ENCODE measurements at regions of chr1 and their contacts with region 1.

Region 1: DNA sequence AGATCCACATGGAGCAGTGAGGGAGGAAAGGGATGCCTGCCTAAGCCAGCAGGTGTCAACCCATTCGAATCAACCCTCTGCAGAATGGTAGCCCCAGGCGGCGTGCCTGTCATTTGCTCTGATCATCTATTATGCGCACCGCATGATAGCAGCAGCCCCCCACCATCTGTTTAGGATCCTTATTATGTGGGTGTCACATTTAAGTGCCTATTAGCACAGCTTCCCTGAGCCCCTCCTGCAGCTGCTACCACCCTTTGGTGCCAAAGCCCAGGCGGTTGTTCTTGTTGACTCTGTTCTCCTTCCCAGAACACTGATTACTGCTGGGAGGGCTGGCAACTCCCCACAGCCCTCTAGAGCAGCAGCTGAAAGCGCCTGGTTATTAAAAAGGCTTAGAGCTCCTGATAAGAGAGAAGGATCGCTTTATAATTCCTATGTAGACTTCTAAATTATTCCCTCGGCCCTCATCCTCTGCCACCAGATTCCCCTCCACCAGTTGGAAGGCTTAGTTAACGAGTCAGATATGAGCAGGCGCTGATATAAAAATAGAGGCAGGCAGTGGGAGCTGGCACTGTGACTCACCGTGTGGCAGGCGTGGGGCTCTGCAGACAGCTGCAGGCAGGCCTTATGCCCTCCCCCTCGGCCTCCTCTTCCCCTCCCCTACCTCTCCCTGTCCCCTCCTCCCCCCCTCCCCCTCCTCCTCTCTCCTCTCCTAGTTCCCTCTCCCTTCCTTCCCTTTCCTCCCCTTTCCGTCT is 23.0 kb downstream of the ACTA1 start:
- DNase-seq: peak; percentile 89 to 96
- ATAC-seq: peak; percentile 69 to 79
- H3K4me3 ChIP-seq: peak overlapping the region; percentile 2 to 23 (median 15)
- H3K27ac ChIP-seq: peak overlapping the region; percentile 89 to 95 (median 92)
- H3K4me1 ChIP-seq: peaks cover 53% of the 10 kb centered on the region in 2 donors
- H3K27me3 ChIP-seq: no peaks in the 10 kb centered on the region
- CTCF ChIP-seq: no peak
- POLR2A ChIP-seq: peak; percentile 61 to 63

Region 2: GRCh38 chr1:229341774-229342655 is 68.9 kb before region 1 on chr1:
- in situ Hi-C with region 1: no loop called
- intact Hi-C with region 1: loop called (anchors 2 kb)
- DNase-seq: peak; percentile 72 to 80
- ATAC-seq: peak; percentile 88 to 92
- H3K4me3 ChIP-seq: peak overlapping the region; percentile 75 to 99 (median 88)
- H3K27ac ChIP-seq: peak overlapping the region; percentile 78 to 93 (median 88)
- H3K4me1 ChIP-seq: peaks cover 6 to 15% of the 10 kb centered on the region in 2 donors
- H3K27me3 ChIP-seq: no peaks in the 10 kb centered on the region
- CTCF ChIP-seq: no peak
- POLR2A ChIP-seq: peak; percentile 59 to 73

Region 3: DNA sequence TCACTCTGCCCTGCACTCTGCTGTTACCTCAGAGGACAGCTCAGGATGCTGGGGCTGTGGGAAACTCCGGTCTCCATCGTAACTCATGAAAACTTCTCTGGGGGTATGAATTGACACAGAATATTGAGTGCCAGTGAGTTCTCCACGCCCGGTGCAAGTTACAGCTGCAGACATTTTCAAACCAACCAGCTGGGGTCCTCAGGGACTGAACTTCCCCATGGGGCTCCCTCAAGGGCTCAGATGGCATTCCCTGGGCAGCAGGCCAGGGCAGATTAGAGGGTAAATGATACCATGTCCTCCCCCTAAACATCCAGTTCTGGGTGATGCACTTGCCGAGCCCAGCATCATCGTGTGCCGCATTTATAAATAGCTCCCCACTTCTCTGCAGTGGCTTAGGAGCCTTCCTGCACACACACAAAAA is 40.3 kb before region 1 on chr1:
- in situ Hi-C with region 1: no loop called
- intact Hi-C with region 1: loop called (anchors 1 kb)
- DNase-seq: peak; percentile 31 to 81
- ATAC-seq: peak; percentile 67 to 78
- H3K4me3 ChIP-seq: no peak overlapping the region
- H3K27ac ChIP-seq: peak overlapping the region; percentile 8 to 31 (median 21)
- H3K4me1 ChIP-seq: peaks cover 24 to 26% of the 10 kb centered on the region in 2 donors
- H3K27me3 ChIP-seq: no peaks in the 10 kb centered on the region
- CTCF ChIP-seq: peak in 3 of 5 experiments; percentile 15 to 38 (median 19)
- POLR2A ChIP-seq: no peak

Region 4: GRCh38 chr1:229430761-229431283 is 20.0 kb after region 1 on chr1:
- in situ Hi-C with region 1: no loop called
- intact Hi-C with region 1: loop called (anchors 1 kb)
- DNase-seq: peak in 1 of 2 donors; percentile 85
- ATAC-seq: peak; percentile 37 to 39
- H3K4me3 ChIP-seq: peak overlapping the region in 1 of 4 donors; percentile 22
- H3K27ac ChIP-seq: peak overlapping the region; percentile 17 to 93 (median 48)
- H3K4me1 ChIP-seq: peaks cover 37 to 51% of the 10 kb centered on the region in 2 donors
- H3K27me3 ChIP-seq: peaks cover 0 to 16% (median 0%) of the 10 kb centered on the region in 3 donors
- CTCF ChIP-seq: peak in 2 of 5 experiments; percentile 23 to 45
- POLR2A ChIP-seq: no peak

Region 5: DNA sequence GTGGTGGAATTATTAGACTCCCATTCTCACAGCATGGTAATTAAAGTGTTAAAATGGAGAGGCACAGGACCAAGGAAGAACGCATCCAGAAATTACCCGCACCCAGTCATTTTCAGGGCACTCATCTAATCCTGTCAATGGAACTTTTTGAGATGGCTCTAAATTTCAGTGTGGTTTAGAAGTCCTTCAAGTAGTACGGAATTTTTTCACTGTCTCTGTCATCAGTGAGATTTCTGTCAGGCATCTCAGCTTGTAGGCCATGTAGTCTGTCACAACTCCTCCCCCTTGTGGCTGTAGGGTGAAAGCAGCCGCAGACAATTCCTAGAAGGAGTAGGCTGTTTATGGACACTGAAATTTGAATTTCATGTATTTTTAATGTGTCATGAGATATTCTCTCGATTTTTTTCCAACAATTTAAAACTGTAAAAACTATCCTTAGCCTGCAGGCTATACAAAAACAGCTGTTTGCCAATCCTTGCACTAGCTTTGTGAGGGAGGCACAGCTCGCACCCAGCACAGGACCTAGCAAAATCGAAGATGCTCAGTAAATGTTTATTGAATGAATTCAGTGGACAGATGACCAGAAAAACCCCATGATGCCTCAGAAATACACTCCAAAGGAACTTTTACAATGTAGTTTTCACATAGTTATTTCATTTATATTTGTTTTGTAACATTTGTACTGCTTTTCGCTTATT is 103.9 kb after region 1 on chr1:
- in situ Hi-C with region 1: no loop called
- intact Hi-C with region 1: no loop called
- DNase-seq: peak; percentile 37 to 55
- ATAC-seq: peak; percentile 77 to 96
- H3K4me3 ChIP-seq: no peak overlapping the region
- H3K27ac ChIP-seq: no peak overlapping the region
- H3K4me1 ChIP-seq: no peaks in the 10 kb centered on the region
- H3K27me3 ChIP-seq: no peaks in the 10 kb centered on the region
- CTCF ChIP-seq: peak; percentile 43 to 81 (median 68)
- POLR2A ChIP-seq: no peak

Measured in gastrocnemius medialis (tissue), 4 donors.